Caco-2 (cell line): ENCODE measurements at regions of chr5 and their contacts with region 1.

Region 1: GRCh38 chr5:163489055-163489744 is 16.2 kb upstream of the MAT2B start:
- DNase-seq: peak in 1 of 2 experiments; percentile 41
- H3K4me3 ChIP-seq: no peak overlapping the region
- H3K4me3 Mint-ChIP-seq: no peak overlapping the region
- H3K27ac Mint-ChIP-seq: no peak overlapping the region
- H3K4me1 ChIP-seq: no peaks in the 10 kb centered on the region
- H3K4me1 Mint-ChIP-seq: no peaks in the 10 kb centered on the region
- H3K27me3 ChIP-seq: no peaks in the 10 kb centered on the region
- H3K27me3 Mint-ChIP-seq: no peaks in the 10 kb centered on the region
- CTCF ChIP-seq: peak in 1 of 2 experiments; percentile 18

Region 2: DNA sequence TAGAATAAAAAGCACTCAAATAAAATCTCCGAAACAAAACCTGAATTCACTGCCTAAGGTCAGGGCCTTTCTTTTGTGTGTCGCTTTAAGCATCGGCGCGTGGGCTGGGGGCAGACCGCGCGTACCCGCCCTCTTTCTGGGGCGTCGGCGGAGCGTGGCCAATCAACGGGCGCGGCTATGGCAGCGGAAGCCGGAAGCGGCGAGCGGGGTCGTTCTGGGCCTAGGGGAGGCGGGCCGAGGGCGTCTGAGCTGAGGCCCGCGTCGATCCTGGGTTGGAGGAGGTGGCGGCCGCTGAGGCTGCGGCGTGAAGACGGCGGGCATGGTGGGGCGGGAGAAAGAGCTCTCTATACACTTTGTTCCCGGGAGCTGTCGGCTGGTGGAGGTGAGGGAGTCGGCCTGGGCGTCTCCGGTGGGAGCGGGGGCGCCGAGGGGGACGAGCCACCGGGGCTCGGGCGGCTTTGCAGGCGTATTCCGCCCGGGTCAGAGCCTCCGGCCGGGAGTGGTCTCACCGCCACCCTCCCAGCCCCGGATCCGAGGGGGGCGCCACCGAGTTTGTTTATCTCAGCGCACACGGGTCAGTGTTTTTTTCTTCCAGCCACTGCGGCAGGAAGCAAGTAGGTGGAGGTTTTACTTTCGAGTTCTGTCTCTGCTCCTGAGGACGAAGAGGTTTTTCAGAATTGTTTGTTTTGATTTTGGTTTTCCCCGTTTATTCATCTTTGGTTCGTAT is 16.3 kb after region 1 on chr5 and contains the start of gene MAT2B:
- CTCF ChIA-PET with region 1: interaction called, 5 read pairs
- POLR2A ChIA-PET with region 1: no interaction called
- intact Hi-C with region 1: loop called (anchors 1 kb)
- DNase-seq: peak; percentile 94 to 95
- H3K4me3 ChIP-seq: peak within 1 kb of the TSS; percentile 72
- H3K4me3 Mint-ChIP-seq: peak within 1 kb of the TSS; percentile 85
- H3K27ac Mint-ChIP-seq: peak within 1 kb of the TSS; percentile 94
- H3K4me1 ChIP-seq: peaks cover 29% of the 10 kb centered on the region
- H3K4me1 Mint-ChIP-seq: peaks cover 12% of the 10 kb centered on the region
- H3K27me3 ChIP-seq: no peaks in the 10 kb centered on the region
- H3K27me3 Mint-ChIP-seq: no peaks in the 10 kb centered on the region
- CTCF ChIP-seq: peak; percentile 32 to 75
- total RNA-seq, gene MAT2B: 23.4 and 25.1 TPM in 2 replicates